ENCODE measurements at regions of chr6 and their contacts with region 1.

Region 1: GRCh38 chr6:56370561-56371211 is 123.3 kb upstream of the COL21A1 start:
- DNase-seq: no peak
- ATAC-seq: peak; percentile 48
- H3K4me3 ChIP-seq: no peak overlapping the region
- H3K27ac ChIP-seq: no peak overlapping the region
- H3K4me1 ChIP-seq: peaks cover 11 to 18% of the 10 kb centered on the region in 2 experiments
- H3K27me3 ChIP-seq: no peaks in the 10 kb centered on the region
- CTCF ChIP-seq: no peak
- POLR2A ChIP-seq: no peak
- RAD21 ChIP-seq: no peak

Region 2: GRCh38 chr6:56193846-56194245 is 176.8 kb before region 1 on chr6:
- CTCF ChIA-PET with region 1: no interaction called
- POLR2A ChIA-PET with region 1: no interaction called
- RAD21 ChIA-PET with region 1: no interaction called
- intact Hi-C with region 1: no loop called
- DNase-seq: no peak
- ATAC-seq: no peak
- H3K4me3 ChIP-seq: no peak overlapping the region
- H3K27ac ChIP-seq: no peak overlapping the region
- H3K4me1 ChIP-seq: no peaks in the 10 kb centered on the region
- H3K27me3 ChIP-seq: no peaks in the 10 kb centered on the region
- CTCF ChIP-seq: no peak
- POLR2A ChIP-seq: no peak
- RAD21 ChIP-seq: no peak

Region 3: GRCh38 chr6:56570413-56571359 is 200.0 kb after region 1 on chr6:
- CTCF ChIA-PET with region 1: interaction called, 3 read pairs
- POLR2A ChIA-PET with region 1: no interaction called
- RAD21 ChIA-PET with region 1: no interaction called
- intact Hi-C with region 1: loop called (anchors 5 kb)
- DNase-seq: no peak
- ATAC-seq: peak; percentile 79
- H3K4me3 ChIP-seq: no peak overlapping the region
- H3K27ac ChIP-seq: no peak overlapping the region
- H3K4me1 ChIP-seq: no peaks in the 10 kb centered on the region
- H3K27me3 ChIP-seq: no peaks in the 10 kb centered on the region
- CTCF ChIP-seq: peak; percentile 24 to 61 (median 50); a peak in 5 of 6 replicates
- POLR2A ChIP-seq: no peak
- RAD21 ChIP-seq: peak; percentile 44

Region 4: DNA sequence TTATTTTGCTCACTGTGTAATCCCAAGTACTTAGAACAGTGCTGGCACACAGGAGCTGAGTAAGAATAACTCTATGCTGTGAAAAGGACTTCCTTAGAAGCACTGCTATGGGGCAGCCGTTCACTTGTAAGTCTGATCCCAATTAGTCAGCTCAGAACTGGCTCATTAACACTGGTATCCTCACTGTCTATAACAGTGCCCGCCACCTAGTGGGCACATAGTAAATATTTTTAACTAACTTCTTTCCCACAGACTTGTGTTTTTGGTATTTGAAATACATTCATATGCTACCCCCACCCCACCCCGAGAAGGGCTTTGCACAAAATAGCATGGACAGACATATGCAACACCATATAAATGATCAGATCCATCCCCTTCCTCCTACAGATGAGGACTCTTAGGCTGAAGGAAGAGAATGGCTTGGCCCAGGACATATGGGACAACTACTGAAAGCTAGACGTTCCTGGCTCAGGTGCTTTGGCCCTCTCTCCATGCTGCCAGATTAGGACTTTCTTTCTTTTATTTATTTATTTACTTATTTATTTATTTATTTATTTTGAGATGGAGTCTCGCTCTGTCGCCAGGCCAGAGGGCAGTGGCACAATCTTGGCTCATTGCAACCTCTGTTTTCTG is 224.9 kb after region 1 on chr6:
- CTCF ChIA-PET with region 1: interaction called, 18 read pairs
- POLR2A ChIA-PET with region 1: interaction called, 3 read pairs
- RAD21 ChIA-PET with region 1: interaction called in 1 of 2 experiments, 3 read pairs
- intact Hi-C with region 1: loop called (anchors 5 kb)
- DNase-seq: peak; percentile 12
- ATAC-seq: peak; percentile 80
- H3K4me3 ChIP-seq: no peak overlapping the region
- H3K27ac ChIP-seq: no peak overlapping the region
- H3K4me1 ChIP-seq: no peaks in the 10 kb centered on the region
- H3K27me3 ChIP-seq: no peaks in the 10 kb centered on the region
- CTCF ChIP-seq: peak; percentile 40 to 70 (median 59); a peak in 5 of 6 replicates
- POLR2A ChIP-seq: no peak
- RAD21 ChIP-seq: peak; percentile 45